ENCODE measurements at regions of chr2 and their contacts with region 1.

Region 1: DNA sequence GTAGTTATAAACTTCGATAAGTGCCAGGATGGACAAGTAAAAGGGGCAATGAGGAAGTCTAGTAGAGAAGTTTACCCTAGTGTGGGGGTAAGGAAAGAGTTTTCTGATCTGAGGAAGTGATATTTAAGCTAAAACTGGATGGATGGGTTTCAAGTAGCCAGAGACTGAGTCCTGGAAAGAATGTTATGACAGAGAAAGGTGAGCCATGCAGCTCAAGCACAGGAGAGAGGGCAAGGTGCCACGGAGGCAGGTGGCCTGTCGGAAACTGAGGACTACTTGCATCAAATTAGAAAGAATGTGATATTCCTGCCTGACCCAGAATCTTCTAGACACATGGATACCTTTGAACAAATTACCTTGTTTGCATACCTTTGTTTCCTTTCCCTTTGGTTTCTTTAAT is 26.5 kb downstream of the NMUR1 start:
- DNase-seq: no peak
- H3K4me3 ChIP-seq: no peak overlapping the region
- H3K27ac ChIP-seq: no peak overlapping the region
- H3K4me1 ChIP-seq: no peaks in the 10 kb centered on the region
- H3K27me3 ChIP-seq: no peaks in the 10 kb centered on the region
- CTCF ChIP-seq: no peak
- EP300 ChIP-seq: no peak
- POLR2A ChIP-seq: no peak
- RAD21 ChIP-seq: no peak

Region 2: GRCh38 chr2:231489990-231490389 is 13.8 kb before region 1 on chr2:
- CTCF ChIA-PET with region 1: interaction called, 13 read pairs
- POLR2A ChIA-PET with region 1: no interaction called
- DNase-seq: peak in 1 of 2 experiments; percentile 82
- H3K4me3 ChIP-seq: no peak overlapping the region
- H3K27ac ChIP-seq: no peak overlapping the region
- H3K4me1 ChIP-seq: no peaks in the 10 kb centered on the region
- H3K27me3 ChIP-seq: no peaks in the 10 kb centered on the region
- CTCF ChIP-seq: peak; percentile 56 to 60 (median 58)
- EP300 ChIP-seq: no peak
- POLR2A ChIP-seq: no peak
- RAD21 ChIP-seq: peak; percentile 58 to 67

Region 3: GRCh38 chr2:231514103-231514950 is 10.6 kb after region 1 on chr2:
- CTCF ChIA-PET with region 1: interaction called, 13 read pairs
- POLR2A ChIA-PET with region 1: interaction called, 8 read pairs
- DNase-seq: peak; percentile 93 to 98
- H3K4me3 ChIP-seq: peak overlapping the region; percentile 82 to 93 (median 88)
- H3K27ac ChIP-seq: peak overlapping the region; percentile 88
- H3K4me1 ChIP-seq: peaks cover 0 to 8% (median 5%) of the 10 kb centered on the region in 4 experiments; a peak in 4 of 7 replicates
- H3K27me3 ChIP-seq: no peaks in the 10 kb centered on the region
- CTCF ChIP-seq: no peak
- EP300 ChIP-seq: no peak
- POLR2A ChIP-seq: peak; percentile 93 to 97
- RAD21 ChIP-seq: no peak

Region 4: GRCh38 chr2:231648587-231649174 is 144.9 kb after region 1 on chr2:
- CTCF ChIA-PET with region 1: no interaction called
- POLR2A ChIA-PET with region 1: no interaction called
- DNase-seq: peak in 1 of 2 experiments; percentile 88
- H3K4me3 ChIP-seq: no peak overlapping the region
- H3K27ac ChIP-seq: no peak overlapping the region
- H3K4me1 ChIP-seq: peaks cover 2 to 7% (median 3%) of the 10 kb centered on the region in 4 experiments; a peak in 4 of 7 replicates
- H3K27me3 ChIP-seq: no peaks in the 10 kb centered on the region
- CTCF ChIP-seq: peak; percentile 88 to 95 (median 90)
- EP300 ChIP-seq: no peak
- POLR2A ChIP-seq: no peak
- RAD21 ChIP-seq: peak; percentile 87 to 92